ENCODE measurements at regions of chr1 and their contacts with region 1.

Region 1: GRCh38 chr1:145927063-145927886 is at the start of gene RBM8A:
- DNase-seq: peak; percentile 98
- ATAC-seq: peak; percentile 98
- H3K4me3 ChIP-seq: peak within 1 kb of the TSS; percentile 71 to 95 (median 83)
- H3K4me3 Mint-ChIP-seq: peak within 1 kb of the TSS; percentile 78
- H3K27ac ChIP-seq: peak within 1 kb of the TSS; percentile 96 to 99
- H3K27ac Mint-ChIP-seq: peak within 1 kb of the TSS; percentile 81
- H3K4me1 ChIP-seq: peaks cover 18 to 30% of the 10 kb centered on the region in 2 donors
- H3K4me1 Mint-ChIP-seq: peaks cover 11% of the 10 kb centered on the region
- H3K27me3 ChIP-seq: no peaks in the 10 kb centered on the region
- H3K27me3 Mint-ChIP-seq: no peaks in the 10 kb centered on the region
- CTCF ChIP-seq: peak; percentile 81
- total RNA-seq, gene RBM8A: 134 and 137 TPM in 2 replicates

Region 2: GRCh38 chr1:145782166-145783099 is 144.8 kb before region 1 on chr1:
- CTCF ChIA-PET with region 1: no interaction called
- POLR2A ChIA-PET with region 1: no interaction called
- intact Hi-C with region 1: no loop called
- DNase-seq: no peak
- ATAC-seq: no peak
- H3K4me3 ChIP-seq: no peak overlapping the region
- H3K4me3 Mint-ChIP-seq: no peak overlapping the region
- H3K27ac ChIP-seq: no peak overlapping the region
- H3K27ac Mint-ChIP-seq: no peak overlapping the region
- H3K4me1 ChIP-seq: no peaks in the 10 kb centered on the region
- H3K4me1 Mint-ChIP-seq: no peaks in the 10 kb centered on the region
- H3K27me3 ChIP-seq: no peaks in the 10 kb centered on the region
- H3K27me3 Mint-ChIP-seq: no peaks in the 10 kb centered on the region
- CTCF ChIP-seq: no peak

Region 3: DNA sequence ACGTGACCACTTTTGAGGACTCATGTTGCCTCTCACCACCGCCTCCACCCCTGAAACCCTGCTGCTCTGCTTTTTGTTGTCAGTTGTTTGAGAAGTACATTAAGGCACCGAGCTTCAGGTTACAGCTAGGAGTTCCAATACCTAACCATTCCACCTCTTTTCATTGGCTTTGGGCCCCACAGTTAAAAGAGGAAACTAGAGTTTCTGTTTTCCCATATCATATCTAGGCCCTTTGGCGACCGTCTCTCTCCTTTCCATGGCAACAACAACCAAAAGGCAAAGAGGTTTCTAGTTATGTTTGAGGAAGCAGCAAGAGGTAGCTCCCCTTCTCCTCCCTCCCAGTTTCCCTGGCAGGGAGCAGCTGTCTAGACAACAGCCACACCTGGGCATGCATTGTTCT is 47.5 kb before region 1 on chr1:
- CTCF ChIA-PET with region 1: no interaction called
- POLR2A ChIA-PET with region 1: no interaction called
- intact Hi-C with region 1: no loop called
- DNase-seq: no peak
- ATAC-seq: no peak
- H3K4me3 ChIP-seq: no peak overlapping the region
- H3K4me3 Mint-ChIP-seq: no peak overlapping the region
- H3K27ac ChIP-seq: no peak overlapping the region
- H3K27ac Mint-ChIP-seq: no peak overlapping the region
- H3K4me1 ChIP-seq: no peaks in the 10 kb centered on the region
- H3K4me1 Mint-ChIP-seq: peaks cover 6% of the 10 kb centered on the region
- H3K27me3 ChIP-seq: peaks cover 0 to 30% (median 14%) of the 10 kb centered on the region in 4 experiments
- H3K27me3 Mint-ChIP-seq: peaks cover 34% of the 10 kb centered on the region
- CTCF ChIP-seq: no peak

Region 4: GRCh38 chr1:145957443-145958319 is 30.4 kb after region 1 on chr1 and contains the start of gene LIX1L:
- CTCF ChIA-PET with region 1: interaction called, 28 read pairs
- POLR2A ChIA-PET with region 1: interaction called, 43 read pairs
- intact Hi-C with region 1: loop called (anchors 1 kb)
- DNase-seq: peak; percentile 96
- ATAC-seq: peak; percentile 89
- H3K4me3 ChIP-seq: peak within 1 kb of the TSS; percentile 64 to 88 (median 74)
- H3K4me3 Mint-ChIP-seq: peak within 1 kb of the TSS; percentile 99
- H3K27ac ChIP-seq: peak within 1 kb of the TSS; percentile 36 to 83
- H3K27ac Mint-ChIP-seq: peak within 1 kb of the TSS; percentile 96
- H3K4me1 ChIP-seq: peaks cover 45 to 65% of the 10 kb centered on the region in 2 donors
- H3K4me1 Mint-ChIP-seq: peaks cover 76% of the 10 kb centered on the region
- H3K27me3 ChIP-seq: no peaks in the 10 kb centered on the region
- H3K27me3 Mint-ChIP-seq: no peaks in the 10 kb centered on the region
- CTCF ChIP-seq: no peak
- total RNA-seq, gene LIX1L: 31.7 and 32.2 TPM in 2 replicates

Region 5: GRCh38 chr1:145963995-145964901 is 37.0 kb after region 1 on chr1 and contains the starts of genes ANKRD34A and POLR3GL:
- CTCF ChIA-PET with region 1: interaction called, 28 read pairs
- POLR2A ChIA-PET with region 1: interaction called, 43 read pairs
- intact Hi-C with region 1: loop called (anchors 1 kb)
- DNase-seq: peak; percentile 92
- ATAC-seq: peak; percentile 91
- H3K4me3 ChIP-seq: peak within 1 kb of the TSS; percentile 54 to 91 (median 87)
- H3K4me3 Mint-ChIP-seq: peak within 1 kb of the TSS; percentile 95
- H3K27ac ChIP-seq: peak within 1 kb of the TSS; percentile 59 to 85
- H3K27ac Mint-ChIP-seq: peak within 1 kb of the TSS; percentile 97
- H3K4me1 ChIP-seq: peaks cover 35 to 53% of the 10 kb centered on the region in 2 donors
- H3K4me1 Mint-ChIP-seq: peaks cover 61% of the 10 kb centered on the region
- H3K27me3 ChIP-seq: no peaks in the 10 kb centered on the region
- H3K27me3 Mint-ChIP-seq: no peaks in the 10 kb centered on the region
- CTCF ChIP-seq: no peak
- total RNA-seq, gene ANKRD34A: 1.8 and 2.8 TPM in 2 replicates
- total RNA-seq, gene POLR3GL: 26.3 and 33.3 TPM in 2 replicates

Region 6: GRCh38 chr1:146012737-146013403 is 85.6 kb after region 1 on chr1:
- CTCF ChIA-PET with region 1: interaction called, 11 read pairs
- POLR2A ChIA-PET with region 1: interaction called, 11 read pairs
- intact Hi-C with region 1: no loop called
- DNase-seq: peak; percentile 82
- ATAC-seq: peak; percentile 51
- H3K4me3 ChIP-seq: no peak overlapping the region
- H3K4me3 Mint-ChIP-seq: no peak overlapping the region
- H3K27ac ChIP-seq: no peak overlapping the region
- H3K27ac Mint-ChIP-seq: no peak overlapping the region
- H3K4me1 ChIP-seq: peaks cover 0 to under 1% of the 10 kb centered on the region in 2 donors
- H3K4me1 Mint-ChIP-seq: peaks cover 2% of the 10 kb centered on the region
- H3K27me3 ChIP-seq: peaks cover 0 to 4% (median 0%) of the 10 kb centered on the region in 4 experiments
- H3K27me3 Mint-ChIP-seq: peaks cover 14% of the 10 kb centered on the region
- CTCF ChIP-seq: peak; percentile 95